Ovary (tissue), 10 donors: ENCODE measurements at regions of chr6 and their contacts with region 1.

Region 1: DNA sequence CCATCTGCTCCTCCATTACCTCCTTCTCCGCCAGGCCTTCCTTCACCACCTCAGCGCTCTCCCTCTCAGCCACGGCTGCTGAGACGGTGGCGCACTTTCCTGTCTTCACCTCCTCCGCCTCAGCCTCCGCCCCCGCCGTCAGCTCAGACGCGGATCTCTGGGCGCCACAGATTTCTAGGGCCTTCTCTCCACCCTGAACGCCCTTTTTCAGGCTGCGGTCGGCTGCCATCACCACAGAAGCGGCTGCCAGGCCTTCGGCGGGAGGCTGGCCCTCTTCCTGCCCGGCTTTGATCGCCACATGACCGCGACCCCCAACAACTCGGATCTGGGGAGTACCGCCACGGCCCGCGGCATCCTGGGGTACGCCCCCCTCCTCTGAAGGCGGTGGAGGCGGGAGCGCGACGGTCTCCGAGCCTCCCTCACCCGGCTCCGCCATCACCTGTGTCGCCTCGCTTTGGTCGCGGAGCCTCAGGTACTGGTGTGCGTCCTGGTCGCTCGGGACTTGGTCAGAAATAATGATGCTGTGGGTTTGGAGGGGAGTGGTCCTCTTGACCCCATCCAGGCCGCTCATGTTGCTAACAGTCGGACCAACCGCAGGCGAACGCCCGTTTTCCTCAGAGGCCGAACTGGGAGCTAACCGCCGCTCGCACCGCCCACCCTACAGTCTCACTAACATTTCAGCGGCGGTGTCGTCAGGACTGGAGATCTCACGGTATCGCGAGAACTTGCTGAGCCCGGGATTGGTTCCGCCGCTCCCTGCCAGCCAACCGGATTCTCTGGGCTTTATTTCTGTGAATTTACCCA is at the start of gene TSPYL1:
- DNase-seq: peak; percentile 95 to 98 (median 96)
- H3K4me3 ChIP-seq: peak within 1 kb of the TSS; percentile 93
- H3K27ac ChIP-seq: peak within 1 kb of the TSS; percentile 99
- H3K4me1 ChIP-seq: peaks cover 6% of the 10 kb centered on the region
- H3K27me3 ChIP-seq: no peaks in the 10 kb centered on the region
- CTCF ChIP-seq: peak in 1 of 3 donors; percentile 15
- EP300 ChIP-seq: no peak
- POLR2A ChIP-seq: peak; percentile 98
- total RNA-seq, gene TSPYL1: 60.0 to 155 (median 113) TPM

Region 2: GRCh38 chr6:116298973-116299372 is 19.5 kb after region 1 on chr6:
- intact Hi-C with region 1: no loop called
- DNase-seq: no peak
- H3K4me3 ChIP-seq: no peak overlapping the region
- H3K27ac ChIP-seq: no peak overlapping the region
- H3K4me1 ChIP-seq: peaks cover 2% of the 10 kb centered on the region
- H3K27me3 ChIP-seq: no peaks in the 10 kb centered on the region
- CTCF ChIP-seq: no peak
- EP300 ChIP-seq: no peak
- POLR2A ChIP-seq: no peak

Region 3: GRCh38 chr6:116444092-116444491 is 164.6 kb after region 1 on chr6:
- intact Hi-C with region 1: loop called in 1 of 4 experiments (anchors 10 kb)
- DNase-seq: no peak
- H3K4me3 ChIP-seq: no peak overlapping the region
- H3K27ac ChIP-seq: no peak overlapping the region
- H3K4me1 ChIP-seq: peaks cover 6% of the 10 kb centered on the region
- H3K27me3 ChIP-seq: no peaks in the 10 kb centered on the region
- CTCF ChIP-seq: peak in 2 of 3 donors; percentile 12 to 17
- EP300 ChIP-seq: no peak
- POLR2A ChIP-seq: no peak

Region 4: GRCh38 chr6:116500969-116501433 is 221.5 kb after region 1 on chr6:
- intact Hi-C with region 1: no loop called
- DNase-seq: no peak
- H3K4me3 ChIP-seq: no peak overlapping the region
- H3K27ac ChIP-seq: no peak overlapping the region
- H3K4me1 ChIP-seq: no peaks in the 10 kb centered on the region
- H3K27me3 ChIP-seq: no peaks in the 10 kb centered on the region
- CTCF ChIP-seq: no peak
- EP300 ChIP-seq: no peak
- POLR2A ChIP-seq: no peak

Region 5: DNA sequence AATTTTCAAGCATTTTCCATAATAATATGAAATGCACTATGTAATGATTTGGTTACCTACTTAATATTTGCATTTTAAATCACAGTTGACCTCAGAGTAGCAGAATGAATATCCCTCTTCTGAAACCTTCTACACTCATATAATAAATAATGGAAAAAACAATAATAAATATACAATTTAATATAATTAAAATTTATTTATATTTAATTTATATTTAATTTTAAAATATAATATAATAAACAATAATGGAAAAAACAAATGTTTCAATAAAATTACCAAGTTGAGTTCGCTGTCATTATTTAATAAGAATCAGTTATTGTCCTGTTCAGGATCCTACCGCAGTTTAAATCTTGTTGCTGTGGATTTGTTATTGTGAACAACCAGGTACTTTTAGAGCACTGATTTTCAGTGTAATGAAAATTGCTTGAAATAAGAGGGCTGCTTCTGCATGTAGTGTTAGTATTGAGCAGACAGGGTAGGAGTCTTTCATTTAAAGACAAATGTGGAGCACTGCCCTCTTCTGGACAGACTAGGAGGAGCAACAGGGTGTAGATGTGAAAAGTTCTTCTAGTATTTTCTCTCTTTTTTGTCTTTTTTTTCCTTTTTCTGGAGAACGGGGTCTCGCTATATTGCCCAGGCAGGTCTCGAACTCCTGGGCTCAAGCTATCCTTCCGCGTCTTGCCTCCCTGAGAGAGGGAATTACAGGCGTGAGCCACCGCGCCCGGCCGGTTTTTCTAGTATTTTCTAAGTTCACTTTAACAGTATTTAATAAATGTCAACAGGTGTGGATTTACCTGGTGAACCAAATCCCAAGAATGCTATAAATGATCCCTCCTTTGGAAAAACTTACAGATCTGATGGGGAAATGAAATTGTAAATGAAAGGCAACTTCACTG is 252.5 kb after region 1 on chr6:
- intact Hi-C with region 1: loop called in 1 of 4 experiments (anchors 10 kb)
- DNase-seq: peak; percentile 25 to 64 (median 36)
- H3K4me3 ChIP-seq: no peak overlapping the region
- H3K27ac ChIP-seq: no peak overlapping the region
- H3K4me1 ChIP-seq: peaks cover 2% of the 10 kb centered on the region
- H3K27me3 ChIP-seq: no peaks in the 10 kb centered on the region
- CTCF ChIP-seq: peak; percentile 23 to 71 (median 55)
- EP300 ChIP-seq: no peak
- POLR2A ChIP-seq: no peak

Region 6: GRCh38 chr6:116561377-116562018 is 282.0 kb after region 1 on chr6:
- intact Hi-C with region 1: loop called in 2 of 4 experiments (anchors 5 to 10 kb)
- DNase-seq: peak; percentile 59 to 82 (median 75)
- H3K4me3 ChIP-seq: no peak overlapping the region
- H3K27ac ChIP-seq: no peak overlapping the region
- H3K4me1 ChIP-seq: no peaks in the 10 kb centered on the region
- H3K27me3 ChIP-seq: no peaks in the 10 kb centered on the region
- CTCF ChIP-seq: peak; percentile 60 to 80 (median 74)
- EP300 ChIP-seq: no peak
- POLR2A ChIP-seq: no peak